ENCODE measurements at regions of chr19 and their contacts with region 1.

Region 1: GRCh38 chr19:53504885-53505284 is 33.1 kb upstream of the ZNF331 start:
- DNase-seq: no peak
- ATAC-seq: no peak
- H3K4me3 ChIP-seq: no peak overlapping the region
- H3K27ac ChIP-seq: no peak overlapping the region
- H3K4me1 ChIP-seq: no peaks in the 10 kb centered on the region
- H3K27me3 ChIP-seq: no peaks in the 10 kb centered on the region
- CTCF ChIP-seq: no peak

Region 2: DNA sequence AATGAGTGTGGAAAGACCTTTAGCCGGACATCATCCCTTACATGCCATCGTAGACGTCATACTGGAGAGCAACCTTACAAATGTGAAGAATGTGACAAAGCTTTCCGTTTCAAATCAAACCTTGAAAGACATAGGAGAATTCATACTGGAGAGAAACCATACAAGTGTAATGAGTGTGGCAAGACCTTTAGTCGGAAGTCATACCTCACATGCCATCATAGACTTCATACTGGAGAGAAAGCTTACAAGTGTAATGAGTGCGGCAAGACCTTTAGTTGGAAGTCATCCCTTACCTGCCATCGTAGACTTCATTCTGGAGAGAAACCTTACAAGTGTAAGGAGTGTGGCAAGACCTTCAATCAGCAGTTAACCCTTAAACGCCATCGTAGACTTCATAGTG is 49.1 kb before region 1 on chr19:
- CTCF ChIA-PET with region 1: no interaction called
- POLR2A ChIA-PET with region 1: no interaction called
- intact Hi-C with region 1: no loop called
- DNase-seq: no peak
- ATAC-seq: no peak
- H3K4me3 ChIP-seq: no peak overlapping the region
- H3K27ac ChIP-seq: no peak overlapping the region
- H3K4me1 ChIP-seq: no peaks in the 10 kb centered on the region
- H3K27me3 ChIP-seq: no peaks in the 10 kb centered on the region
- CTCF ChIP-seq: no peak

Region 3: GRCh38 chr19:53530622-53531021 is 25.7 kb after region 1 on chr19:
- CTCF ChIA-PET with region 1: no interaction called
- POLR2A ChIA-PET with region 1: no interaction called
- intact Hi-C with region 1: no loop called
- DNase-seq: no peak
- ATAC-seq: no peak
- H3K4me3 ChIP-seq: no peak overlapping the region
- H3K27ac ChIP-seq: no peak overlapping the region
- H3K4me1 ChIP-seq: no peaks in the 10 kb centered on the region
- H3K27me3 ChIP-seq: no peaks in the 10 kb centered on the region
- CTCF ChIP-seq: no peak

Region 4: DNA sequence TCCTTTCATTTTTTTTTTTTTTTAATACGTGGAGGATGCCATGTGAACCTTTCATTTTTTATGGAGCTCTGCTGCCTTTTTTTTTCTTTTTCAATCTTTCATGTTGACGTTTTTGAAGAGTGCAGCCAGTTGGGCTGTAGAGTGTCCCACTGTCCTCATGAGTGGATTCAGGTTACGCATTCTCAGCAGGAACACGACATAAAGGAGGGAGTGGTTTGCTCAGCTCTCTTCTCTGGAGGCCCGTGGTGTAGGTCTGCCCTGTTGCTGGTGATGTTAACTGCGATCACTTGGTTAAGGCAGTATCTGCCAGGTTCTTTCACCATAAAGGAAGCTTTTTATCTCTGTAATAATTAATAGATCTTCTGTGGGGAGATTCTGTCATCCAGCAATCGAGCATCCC is 431.1 kb after region 1 on chr19:
- CTCF ChIA-PET with region 1: interaction called, 10 read pairs
- POLR2A ChIA-PET with region 1: no interaction called
- intact Hi-C with region 1: no loop called
- DNase-seq: no peak
- ATAC-seq: no peak
- H3K4me3 ChIP-seq: no peak overlapping the region
- H3K27ac ChIP-seq: no peak overlapping the region
- H3K4me1 ChIP-seq: no peaks in the 10 kb centered on the region
- H3K27me3 ChIP-seq: 0 out of 2 replicates have a peak, but pooled peaks cover 3% of the 10 kb centered on the region
- CTCF ChIP-seq: no peak

Measured in PC-3 (cell line).